ENCODE measurements at regions of chr9 and their contacts with region 1.

Region 1: DNA sequence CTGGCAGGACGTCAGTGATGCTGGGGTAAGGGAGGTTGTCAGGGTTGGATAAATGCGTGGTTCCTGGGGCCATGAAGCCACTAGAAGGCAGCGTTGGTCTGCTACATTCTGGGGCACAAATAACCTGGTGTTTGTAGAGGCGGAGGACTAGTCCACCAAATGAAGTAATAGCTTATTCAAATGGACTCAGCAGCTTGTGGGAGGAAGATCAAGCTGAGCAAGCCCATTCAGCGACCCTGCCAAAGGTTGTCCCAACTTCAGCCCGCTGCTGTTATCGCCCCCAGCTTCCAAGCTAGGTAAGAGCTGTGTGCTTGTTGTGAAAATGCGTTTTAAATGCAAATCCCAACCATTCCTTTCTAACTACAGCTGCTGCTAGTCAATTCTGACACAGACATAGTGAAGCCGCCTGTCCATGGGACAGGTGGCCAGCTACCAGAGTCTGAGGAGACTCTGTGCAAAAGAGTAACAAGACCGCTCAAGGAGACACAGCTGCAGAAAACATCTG is 7.6 kb upstream of the FAM240B start:
- DNase-seq: peak in 1 of 4 experiments; percentile 5
- ATAC-seq: no peak
- H3K4me3 ChIP-seq: no peak overlapping the region
- H3K27ac ChIP-seq: no peak overlapping the region
- H3K4me1 ChIP-seq: no peaks in the 10 kb centered on the region
- H3K27me3 ChIP-seq: peaks cover 0 to 5% of the 10 kb centered on the region in 2 experiments; a peak in 1 of 5 replicates
- CTCF ChIP-seq: 0 out of 6 replicates have a peak, but pooled peaks of 1 of the 3 experiments have one; percentile 10
- EP300 ChIP-seq: no peak
- POLR2A ChIP-seq: no peak
- RAD21 ChIP-seq: no peak

Region 2: GRCh38 chr9:38641985-38642864 is 85.3 kb before region 1 on chr9:
- CTCF ChIA-PET with region 1: no interaction called
- POLR2A ChIA-PET with region 1: no interaction called
- in situ Hi-C with region 1: no loop called
- intact Hi-C with region 1: loop called (anchors 10 kb)
- DNase-seq: peak in 3 of 4 experiments; percentile 9 to 12 (median 9)
- ATAC-seq: peak; percentile 57
- H3K4me3 ChIP-seq: no peak overlapping the region
- H3K27ac ChIP-seq: no peak overlapping the region
- H3K4me1 ChIP-seq: no peaks in the 10 kb centered on the region
- H3K27me3 ChIP-seq: peaks cover 4 to 8% of the 10 kb centered on the region in 2 experiments; a peak in 2 of 5 replicates
- CTCF ChIP-seq: peak; percentile 29 to 42 (median 38); a peak in 4 of 6 replicates
- EP300 ChIP-seq: no peak
- POLR2A ChIP-seq: no peak
- RAD21 ChIP-seq: peak; percentile 18 to 31; a peak in 2 of 4 replicates

Region 3: DNA sequence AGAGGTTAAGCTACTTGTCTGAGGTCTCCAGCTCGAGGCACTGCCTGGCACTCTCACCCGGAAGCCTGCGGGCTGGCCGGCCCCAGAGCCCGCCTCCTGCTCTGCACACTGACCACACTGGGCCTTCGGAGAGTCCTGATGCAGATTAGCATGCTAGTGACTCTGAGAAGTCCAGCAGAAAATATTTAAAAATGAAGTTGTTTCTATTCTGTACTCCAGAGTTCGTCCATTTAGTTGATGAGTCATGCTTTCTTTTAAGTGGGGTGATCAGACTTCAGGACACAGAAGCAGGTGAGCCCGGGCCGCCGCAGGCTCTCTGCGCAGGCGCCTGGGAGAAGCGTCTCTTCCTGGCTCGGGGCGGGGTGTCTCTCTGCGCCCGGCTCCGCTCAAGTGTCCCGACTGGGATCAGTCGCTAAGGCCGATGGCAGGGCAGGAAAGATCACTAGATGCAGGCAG is 40.1 kb before region 1 on chr9:
- CTCF ChIA-PET with region 1: no interaction called
- POLR2A ChIA-PET with region 1: no interaction called
- in situ Hi-C with region 1: no loop called
- intact Hi-C with region 1: no loop called
- DNase-seq: peak; percentile 33 to 50 (median 36)
- ATAC-seq: peak; percentile 86
- H3K4me3 ChIP-seq: no peak overlapping the region
- H3K27ac ChIP-seq: no peak overlapping the region
- H3K4me1 ChIP-seq: peaks cover 4 to 6% of the 10 kb centered on the region in 2 experiments; a peak in 2 of 5 replicates
- H3K27me3 ChIP-seq: peaks cover 8 to 17% of the 10 kb centered on the region in 2 experiments; a peak in 4 of 5 replicates
- CTCF ChIP-seq: no peak
- EP300 ChIP-seq: no peak
- POLR2A ChIP-seq: no peak
- RAD21 ChIP-seq: no peak